A673 (cell line): ENCODE measurements at regions of chr6 and their contacts with region 1.

Region 1: DNA sequence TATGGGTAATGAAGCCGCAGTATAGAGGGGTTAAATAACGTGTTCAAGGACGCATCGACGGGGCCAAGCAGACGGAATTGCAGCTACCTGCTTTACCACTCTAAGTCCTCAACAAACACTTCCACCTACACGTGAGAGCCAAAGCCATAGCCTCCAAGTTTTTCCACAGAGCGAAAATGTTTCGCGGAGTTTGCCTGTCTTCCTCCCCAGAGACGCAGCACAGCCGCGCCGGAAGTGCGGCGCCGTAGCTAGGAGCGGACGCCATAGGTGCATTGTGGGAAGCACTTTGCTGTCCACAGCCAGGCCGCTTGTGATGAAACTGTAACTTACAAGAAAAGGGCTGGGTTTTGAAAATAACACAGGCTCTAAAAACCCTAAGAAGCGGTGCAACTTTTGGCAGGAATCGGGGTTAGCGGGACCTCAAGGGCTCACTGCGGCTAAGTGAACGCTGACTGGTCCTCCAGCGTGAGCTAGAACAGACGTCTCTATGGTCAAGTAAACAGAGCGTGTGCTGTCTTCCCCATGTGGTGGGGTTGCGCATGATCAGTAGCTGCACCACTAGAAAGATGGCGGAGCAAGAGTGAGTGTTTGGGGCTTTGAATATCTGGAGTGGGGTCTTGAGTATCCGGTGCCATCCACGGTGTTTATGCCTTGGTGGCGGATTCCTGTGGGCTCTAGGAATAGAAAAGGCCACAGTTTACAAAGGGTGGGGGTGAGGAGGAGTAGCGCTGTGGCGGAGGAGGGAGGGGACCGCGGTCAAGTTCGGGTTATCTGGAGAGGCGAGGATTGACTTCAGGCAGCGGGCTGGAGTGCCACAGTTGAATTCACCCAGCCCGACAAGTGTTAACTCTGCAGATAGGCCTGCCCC is at the start of gene RPL7L1:
- DNase-seq: peak; percentile 94
- H3K4me3 ChIP-seq: peak within 1 kb of the TSS; percentile 70
- H3K27ac ChIP-seq: peak within 1 kb of the TSS; percentile 94
- H3K4me1 ChIP-seq: peaks cover 3% of the 10 kb centered on the region
- H3K27me3 ChIP-seq: no peaks in the 10 kb centered on the region
- CTCF ChIP-seq: no peak
- total RNA-seq, gene RPL7L1: 168 and 183 TPM in 2 replicates

Region 2: GRCh38 chr6:42217519-42218367 is 661.9 kb before region 1 on chr6 and contains the start of gene MRPS10:
- CTCF ChIA-PET with region 1: no interaction called
- POLR2A ChIA-PET with region 1: no interaction called
- intact Hi-C with region 1: loop called (anchors 2 kb)
- DNase-seq: peak; percentile 97
- H3K4me3 ChIP-seq: peak within 1 kb of the TSS; percentile 98
- H3K27ac ChIP-seq: peak within 1 kb of the TSS; percentile 90
- H3K4me1 ChIP-seq: peaks cover 13% of the 10 kb centered on the region
- H3K27me3 ChIP-seq: no peaks in the 10 kb centered on the region
- CTCF ChIP-seq: no peak
- total RNA-seq, gene MRPS10: 50.0 and 52.0 TPM in 2 replicates

Region 3: DNA sequence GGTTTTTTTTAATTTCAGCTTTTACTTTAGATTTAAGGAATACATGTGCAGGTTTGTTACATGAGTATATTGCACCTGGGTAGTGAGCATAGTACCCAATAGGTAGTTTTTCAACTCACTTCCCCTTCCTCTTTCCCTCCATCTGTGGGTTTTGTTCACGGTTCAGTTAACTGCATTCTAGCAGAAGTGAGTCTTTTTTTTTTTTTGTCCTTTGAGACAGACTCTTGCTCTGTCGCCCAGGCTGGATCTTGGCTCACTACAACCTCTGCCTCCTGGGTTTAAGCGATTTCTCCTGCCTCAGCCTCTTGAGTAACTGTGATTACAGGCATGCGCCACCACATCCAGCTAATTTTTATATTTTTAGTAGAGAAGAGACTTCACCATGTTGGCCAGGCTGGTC is 307.1 kb before region 1 on chr6:
- CTCF ChIA-PET with region 1: no interaction called
- POLR2A ChIA-PET with region 1: no interaction called
- intact Hi-C with region 1: loop called (anchors 10 kb)
- DNase-seq: no peak
- H3K4me3 ChIP-seq: no peak overlapping the region
- H3K27ac ChIP-seq: no peak overlapping the region
- H3K4me1 ChIP-seq: no peaks in the 10 kb centered on the region
- H3K27me3 ChIP-seq: no peaks in the 10 kb centered on the region
- CTCF ChIP-seq: no peak

Region 4: GRCh38 chr6:42661540-42662153 is 218.0 kb before region 1 on chr6:
- CTCF ChIA-PET with region 1: interaction called, 9 read pairs
- POLR2A ChIA-PET with region 1: no interaction called
- intact Hi-C with region 1: loop called (anchors 1 kb)
- DNase-seq: peak; percentile 83
- H3K4me3 ChIP-seq: no peak overlapping the region
- H3K27ac ChIP-seq: no peak overlapping the region
- H3K4me1 ChIP-seq: no peaks in the 10 kb centered on the region
- H3K27me3 ChIP-seq: no peaks in the 10 kb centered on the region
- CTCF ChIP-seq: peak; percentile 94

Region 5: GRCh38 chr6:42726485-42727086 is 153.0 kb before region 1 on chr6:
- CTCF ChIA-PET with region 1: no interaction called
- POLR2A ChIA-PET with region 1: no interaction called
- intact Hi-C with region 1: loop called (anchors 5 kb)
- DNase-seq: peak; percentile 87
- H3K4me3 ChIP-seq: peak overlapping the region; percentile 21
- H3K27ac ChIP-seq: peak overlapping the region; percentile 45
- H3K4me1 ChIP-seq: peaks cover 14% of the 10 kb centered on the region
- H3K27me3 ChIP-seq: no peaks in the 10 kb centered on the region
- CTCF ChIP-seq: peak; percentile 97

Region 6: GRCh38 chr6:42745707-42746462 is 133.7 kb before region 1 on chr6 and contains the start of gene TBCC:
- CTCF ChIA-PET with region 1: no interaction called
- POLR2A ChIA-PET with region 1: no interaction called
- intact Hi-C with region 1: loop called (anchors 2 kb)
- DNase-seq: peak; percentile 99
- H3K4me3 ChIP-seq: peak within 1 kb of the TSS; percentile 98
- H3K27ac ChIP-seq: peak within 1 kb of the TSS; percentile 97
- H3K4me1 ChIP-seq: peaks cover 42% of the 10 kb centered on the region
- H3K27me3 ChIP-seq: no peaks in the 10 kb centered on the region
- CTCF ChIP-seq: no peak
- total RNA-seq, gene TBCC: 29.4 and 31.3 TPM in 2 replicates

Region 7: DNA sequence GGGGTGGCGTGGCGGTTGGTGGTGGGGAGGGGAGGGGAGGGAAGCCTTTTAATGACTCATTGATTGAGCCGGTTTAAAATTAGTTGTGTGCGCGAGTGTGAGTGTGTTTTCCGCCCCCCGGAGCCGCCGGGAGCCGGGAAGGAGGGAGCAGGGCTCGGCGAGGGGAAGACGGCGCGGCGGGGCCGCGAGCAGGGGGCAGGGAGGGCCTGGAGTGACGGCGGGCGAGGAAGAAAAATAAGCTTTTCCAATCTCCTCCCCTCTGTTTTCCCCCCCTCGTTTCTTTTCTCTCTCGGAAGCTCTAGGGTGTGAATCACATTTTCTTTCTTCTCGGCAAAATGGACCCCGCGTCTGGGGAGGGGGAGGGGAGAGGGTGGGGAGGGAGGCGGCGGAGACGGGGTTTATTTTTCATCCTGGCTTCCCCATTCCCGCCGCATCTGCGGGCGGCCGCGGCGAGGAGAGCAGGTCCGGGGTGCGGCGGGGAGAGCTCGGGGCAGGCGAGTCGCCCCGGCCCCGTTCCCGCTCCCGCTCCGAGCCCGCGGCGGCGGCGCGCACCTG is 96.9 kb before region 1 on chr6:
- CTCF ChIA-PET with region 1: interaction called, 3 read pairs
- POLR2A ChIA-PET with region 1: no interaction called
- intact Hi-C with region 1: loop called (anchors 5 kb)
- DNase-seq: peak; percentile 89
- H3K4me3 ChIP-seq: peak overlapping the region; percentile 75
- H3K27ac ChIP-seq: peak overlapping the region; percentile 98
- H3K4me1 ChIP-seq: peaks cover 29% of the 10 kb centered on the region
- H3K27me3 ChIP-seq: no peaks in the 10 kb centered on the region
- CTCF ChIP-seq: no peak